IMR-90 (cell line): ENCODE measurements at regions of chr15 and their contacts with region 1.

Region 1: GRCh38 chr15:29712149-29712885 is 110.0 kb downstream of the TJP1 start:
- DNase-seq: no peak
- ATAC-seq: no peak
- H3K4me3 ChIP-seq: no peak overlapping the region
- H3K27ac ChIP-seq: no peak overlapping the region
- H3K4me1 ChIP-seq: no peaks in the 10 kb centered on the region
- H3K27me3 ChIP-seq: no peaks in the 10 kb centered on the region
- CTCF ChIP-seq: no peak
- POLR2A ChIP-seq: no peak
- RAD21 ChIP-seq: no peak

Region 2: GRCh38 chr15:29403772-29404171 is 308.5 kb before region 1 on chr15:
- CTCF ChIA-PET with region 1: no interaction called
- POLR2A ChIA-PET with region 1: no interaction called
- dilution Hi-C with region 1: no loop called
- in situ Hi-C with region 1: no loop called
- intact Hi-C with region 1: no loop called
- DNase-seq: no peak
- ATAC-seq: no peak
- H3K4me3 ChIP-seq: no peak overlapping the region
- H3K27ac ChIP-seq: no peak overlapping the region
- H3K4me1 ChIP-seq: no peaks in the 10 kb centered on the region
- H3K27me3 ChIP-seq: no peaks in the 10 kb centered on the region
- CTCF ChIP-seq: no peak
- POLR2A ChIP-seq: no peak
- RAD21 ChIP-seq: no peak

Region 3: DNA sequence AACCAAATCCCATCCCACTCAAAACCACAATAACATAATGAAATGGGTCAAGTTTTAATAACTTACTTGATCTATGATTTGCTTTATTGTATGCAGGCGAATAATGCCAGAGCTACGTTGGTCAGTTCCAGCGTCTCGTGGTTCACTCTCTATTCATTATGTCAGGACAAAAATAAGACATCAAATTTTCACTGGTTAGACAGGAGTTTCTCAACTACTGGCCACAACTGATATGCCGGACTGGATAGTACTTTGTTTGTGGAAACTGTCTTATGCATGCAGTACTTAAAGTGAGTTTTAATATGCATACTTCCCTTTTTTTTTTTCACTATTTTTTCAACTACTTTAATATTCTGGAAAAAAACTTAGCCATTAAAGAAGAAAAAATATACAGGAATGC is 15.6 kb after region 1 on chr15:
- CTCF ChIA-PET with region 1: no interaction called
- POLR2A ChIA-PET with region 1: no interaction called
- dilution Hi-C with region 1: no loop called
- in situ Hi-C with region 1: no loop called
- intact Hi-C with region 1: loop called (anchors 2 kb)
- DNase-seq: no peak
- ATAC-seq: no peak
- H3K4me3 ChIP-seq: no peak overlapping the region
- H3K27ac ChIP-seq: no peak overlapping the region
- H3K4me1 ChIP-seq: no peaks in the 10 kb centered on the region
- H3K27me3 ChIP-seq: no peaks in the 10 kb centered on the region
- CTCF ChIP-seq: no peak
- POLR2A ChIP-seq: no peak
- RAD21 ChIP-seq: no peak